MCF 10A (cell line): ENCODE measurements at regions of chr2 and their contacts with region 1.

Region 1: DNA sequence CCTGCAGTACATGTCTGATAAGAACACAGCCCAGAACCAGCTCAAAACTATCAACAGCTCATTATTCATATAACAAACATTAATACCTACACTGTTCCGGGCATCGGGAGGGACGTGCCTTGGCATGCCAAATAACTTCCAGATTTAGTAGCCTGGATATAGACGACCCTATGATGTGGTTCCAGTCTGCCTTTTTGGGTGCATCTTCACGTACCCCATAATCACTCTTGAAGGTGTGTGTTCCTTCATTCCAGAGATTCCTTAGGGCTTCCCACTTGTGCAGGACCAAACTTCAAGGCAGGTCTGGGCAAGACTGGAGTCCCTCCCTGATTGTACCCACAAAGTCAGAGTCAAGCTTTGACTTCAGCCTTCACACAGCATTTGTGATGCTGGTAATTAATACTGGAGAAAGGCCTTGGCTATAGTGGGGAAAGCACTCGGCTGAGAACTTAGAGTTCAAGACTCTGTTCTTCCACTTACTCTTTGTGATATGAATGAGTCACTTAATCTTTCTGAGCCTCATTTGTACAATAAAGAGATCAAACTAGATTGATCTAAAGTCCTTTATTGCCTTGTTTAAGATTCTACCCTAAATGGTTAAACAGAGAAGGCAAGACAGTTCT is 27.7 kb upstream of the SPATS2L start:
- DNase-seq: peak; percentile 32
- H3K4me3 Mint-ChIP-seq: no peak overlapping the region
- H3K27ac Mint-ChIP-seq: peak overlapping the region; percentile 73
- H3K4me1 Mint-ChIP-seq: peaks cover 21% of the 10 kb centered on the region
- H3K27me3 Mint-ChIP-seq: no peaks in the 10 kb centered on the region
- CTCF ChIP-seq: no peak

Region 2: DNA sequence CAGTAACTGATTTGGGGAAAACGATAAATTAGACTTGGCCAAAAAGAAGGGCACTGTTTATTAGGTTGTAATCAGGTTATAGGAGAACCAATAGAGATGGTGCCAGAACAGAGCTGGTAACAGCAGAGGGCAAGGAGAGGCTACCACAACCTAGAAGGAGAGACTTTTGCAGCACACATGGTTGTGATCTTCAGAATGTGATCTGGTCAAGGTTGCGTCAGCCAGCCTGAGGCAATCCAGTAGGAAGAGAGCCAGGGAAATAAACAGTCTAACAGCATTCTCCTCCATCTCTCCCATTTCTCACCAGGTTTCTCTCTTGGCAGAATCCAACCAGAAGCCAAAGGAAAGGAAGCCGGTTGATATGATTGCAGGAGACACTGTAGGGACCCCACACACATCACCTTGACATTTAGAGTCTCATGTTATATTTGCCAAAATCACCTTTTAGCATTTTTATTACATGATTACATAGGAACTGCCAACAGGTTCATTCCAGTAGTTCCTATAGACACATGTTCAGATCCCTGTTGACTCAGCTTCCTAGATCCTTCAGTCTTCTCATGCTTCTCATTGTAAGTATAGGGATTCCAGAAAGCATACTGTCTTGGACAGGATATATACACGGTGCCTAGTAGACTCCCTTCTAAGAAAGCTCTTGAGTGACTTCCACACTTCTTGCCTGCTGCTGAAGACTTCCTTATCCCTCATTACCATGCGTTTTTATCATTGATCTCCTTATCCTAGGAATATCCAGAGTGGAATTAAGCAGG is 10.0 kb after region 1 on chr2:
- CTCF ChIA-PET with region 1: interaction called, 5 read pairs
- POLR2A ChIA-PET with region 1: interaction called, 20 read pairs
- intact Hi-C with region 1: no loop called
- DNase-seq: peak; percentile 83
- H3K4me3 Mint-ChIP-seq: no peak overlapping the region
- H3K27ac Mint-ChIP-seq: no peak overlapping the region
- H3K4me1 Mint-ChIP-seq: peaks cover 12% of the 10 kb centered on the region
- H3K27me3 Mint-ChIP-seq: no peaks in the 10 kb centered on the region
- CTCF ChIP-seq: no peak